CD4-positive, alpha-beta memory T cell (primary cell): ENCODE measurements at regions of chr19 and their contacts with region 1.

Region 1: DNA sequence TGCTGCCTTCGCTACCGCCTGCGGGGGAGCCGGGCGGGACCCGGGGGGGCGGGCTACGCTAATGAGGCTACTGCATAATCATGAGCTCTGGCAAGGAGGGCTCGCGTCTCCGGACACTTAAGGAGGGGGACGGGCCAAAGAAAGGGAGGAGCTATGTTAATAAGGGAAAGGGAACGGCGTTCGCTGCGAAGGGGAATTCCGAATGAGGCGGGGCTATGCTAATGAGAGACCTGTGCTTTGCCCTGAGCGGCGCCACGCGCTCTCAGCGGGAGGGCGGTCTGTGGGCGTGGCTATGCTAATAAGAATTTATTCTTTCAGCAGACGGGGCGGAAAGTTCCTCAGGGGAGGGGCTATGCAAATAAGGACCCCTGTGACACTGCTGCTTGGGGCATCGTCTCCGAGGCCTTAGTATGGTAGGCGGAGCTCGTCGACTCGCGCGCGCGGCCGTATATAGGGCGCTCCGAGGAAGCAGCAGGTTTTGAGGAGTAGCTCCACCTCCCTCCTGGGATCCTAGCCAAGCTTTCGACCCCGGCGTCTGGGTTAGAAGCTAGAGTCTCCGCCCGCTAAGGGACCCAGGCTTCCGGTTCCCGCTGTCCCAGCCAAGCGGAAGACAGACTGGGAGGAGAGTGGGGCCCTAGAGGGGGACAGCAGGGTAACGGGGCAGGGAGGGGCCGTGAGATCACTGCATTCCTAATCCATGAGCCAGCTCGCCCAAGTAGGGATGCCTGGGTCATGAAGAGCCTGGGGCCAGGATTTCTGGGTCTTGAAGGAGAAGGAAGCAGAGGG is at the start of gene RRAS:
- DNase-seq: peak; percentile 99 to 100 (median 100)
- H3K4me3 ChIP-seq: peak within 1 kb of the TSS; percentile 42 to 73
- H3K4me3 Mint-ChIP-seq: peak within 1 kb of the TSS; percentile 89 to 95 (median 92)
- H3K27ac ChIP-seq: peak within 1 kb of the TSS; percentile 97
- H3K27ac Mint-ChIP-seq: peak within 1 kb of the TSS; percentile 96 to 100 (median 99)
- H3K4me1 ChIP-seq: peaks cover 63% of the 10 kb centered on the region
- H3K4me1 Mint-ChIP-seq: peaks cover 44 to 73% (median 56%) of the 10 kb centered on the region in 4 donors
- H3K27me3 ChIP-seq: no peaks in the 10 kb centered on the region
- H3K27me3 Mint-ChIP-seq: no peaks in the 10 kb centered on the region
- total RNA-seq, gene RRAS: 12.0 to 13.4 TPM

Region 2: GRCh38 chr19:48513289-48514122 is 1126.8 kb before region 1 on chr19:
- CTCF ChIA-PET with region 1: no interaction called
- POLR2A ChIA-PET with region 1: no interaction called
- intact Hi-C with region 1: loop called (anchors 5 kb)
- DNase-seq: peak; percentile 70 to 88 (median 73)
- H3K4me3 ChIP-seq: peak overlapping the region; percentile 65 to 89
- H3K4me3 Mint-ChIP-seq: no peak overlapping the region
- H3K27ac ChIP-seq: peak overlapping the region; percentile 59
- H3K27ac Mint-ChIP-seq: peak overlapping the region in 3 of 7 donors; percentile 68 to 96 (median 91)
- H3K4me1 ChIP-seq: peaks cover 27% of the 10 kb centered on the region
- H3K4me1 Mint-ChIP-seq: peaks cover 6 to 16% (median 11%) of the 10 kb centered on the region in 4 donors
- H3K27me3 ChIP-seq: no peaks in the 10 kb centered on the region
- H3K27me3 Mint-ChIP-seq: no peaks in the 10 kb centered on the region

Region 3: GRCh38 chr19:49497047-49497788 is 143.1 kb before region 1 on chr19:
- CTCF ChIA-PET with region 1: no interaction called
- POLR2A ChIA-PET with region 1: interaction called, 38 read pairs
- intact Hi-C with region 1: loop called (anchors 1 kb)
- DNase-seq: peak; percentile 79 to 89 (median 83)
- H3K4me3 ChIP-seq: peak overlapping the region; percentile 92 to 99
- H3K4me3 Mint-ChIP-seq: peak overlapping the region; percentile 99 to 100 (median 100)
- H3K27ac ChIP-seq: peak overlapping the region; percentile 95
- H3K27ac Mint-ChIP-seq: peak overlapping the region; percentile 95 to 100 (median 99)
- H3K4me1 ChIP-seq: peaks cover 55% of the 10 kb centered on the region
- H3K4me1 Mint-ChIP-seq: peaks cover 23 to 87% (median 43%) of the 10 kb centered on the region in 4 donors
- H3K27me3 ChIP-seq: no peaks in the 10 kb centered on the region
- H3K27me3 Mint-ChIP-seq: no peaks in the 10 kb centered on the region

Region 4: GRCh38 chr19:49544154-49544553 is 96.2 kb before region 1 on chr19:
- CTCF ChIA-PET with region 1: no interaction called
- POLR2A ChIA-PET with region 1: no interaction called
- intact Hi-C with region 1: no loop called
- DNase-seq: no peak
- H3K4me3 ChIP-seq: no peak overlapping the region
- H3K4me3 Mint-ChIP-seq: peak overlapping the region in 1 of 8 donors; percentile 51
- H3K27ac ChIP-seq: no peak overlapping the region
- H3K27ac Mint-ChIP-seq: peak overlapping the region in 6 of 7 donors; percentile 23 to 83 (median 62)
- H3K4me1 ChIP-seq: peaks cover 19% of the 10 kb centered on the region
- H3K4me1 Mint-ChIP-seq: peaks cover 19 to 35% (median 25%) of the 10 kb centered on the region in 4 donors
- H3K27me3 ChIP-seq: no peaks in the 10 kb centered on the region
- H3K27me3 Mint-ChIP-seq: no peaks in the 10 kb centered on the region

Region 5: GRCh38 chr19:49590071-49590970 is 50.0 kb before region 1 on chr19:
- CTCF ChIA-PET with region 1: interaction called, 12 read pairs
- POLR2A ChIA-PET with region 1: interaction called, 81 read pairs
- intact Hi-C with region 1: loop called (anchors 1 kb)
- DNase-seq: peak; percentile 94 to 96 (median 95)
- H3K4me3 ChIP-seq: peak overlapping the region; percentile 68 to 95
- H3K4me3 Mint-ChIP-seq: peak overlapping the region; percentile 81 to 95 (median 93)
- H3K27ac ChIP-seq: peak overlapping the region; percentile 74
- H3K27ac Mint-ChIP-seq: peak overlapping the region; percentile 84 to 97 (median 94)
- H3K4me1 ChIP-seq: peaks cover 23% of the 10 kb centered on the region
- H3K4me1 Mint-ChIP-seq: peaks cover 21 to 48% (median 31%) of the 10 kb centered on the region in 4 donors
- H3K27me3 ChIP-seq: no peaks in the 10 kb centered on the region
- H3K27me3 Mint-ChIP-seq: no peaks in the 10 kb centered on the region

Region 6: GRCh38 chr19:49665351-49666119 is 25.2 kb after region 1 on chr19 and contains the starts of genes BCL2L12 and IRF3:
- CTCF ChIA-PET with region 1: interaction called, 6 read pairs
- POLR2A ChIA-PET with region 1: interaction called, 146 read pairs
- intact Hi-C with region 1: loop called (anchors 1 kb)
- DNase-seq: peak; percentile 99
- H3K4me3 ChIP-seq: peak within 1 kb of the TSS; percentile 99
- H3K4me3 Mint-ChIP-seq: peak within 1 kb of the TSS; percentile 95 to 100 (median 97)
- H3K27ac ChIP-seq: peak within 1 kb of the TSS; percentile 93
- H3K27ac Mint-ChIP-seq: peak within 1 kb of the TSS; percentile 95 to 100 (median 99)
- H3K4me1 ChIP-seq: peaks cover 31% of the 10 kb centered on the region
- H3K4me1 Mint-ChIP-seq: peaks cover 19 to 56% (median 31%) of the 10 kb centered on the region in 4 donors
- H3K27me3 ChIP-seq: no peaks in the 10 kb centered on the region
- H3K27me3 Mint-ChIP-seq: no peaks in the 10 kb centered on the region
- total RNA-seq, gene BCL2L12: 21.9 to 22.1 TPM
- total RNA-seq, gene IRF3: 366 to 386 TPM

Region 7: GRCh38 chr19:49869441-49870176 is 229.3 kb after region 1 on chr19:
- CTCF ChIA-PET with region 1: no interaction called
- POLR2A ChIA-PET with region 1: interaction called, 3 read pairs
- intact Hi-C with region 1: loop called (anchors 2 kb)
- DNase-seq: peak; percentile 92 to 94 (median 92)
- H3K4me3 ChIP-seq: peak overlapping the region; percentile 47 to 70
- H3K4me3 Mint-ChIP-seq: peak overlapping the region in 3 of 8 donors; percentile 78 to 87 (median 81)
- H3K27ac ChIP-seq: peak overlapping the region; percentile 66
- H3K27ac Mint-ChIP-seq: peak overlapping the region in 5 of 7 donors; percentile 88 to 94 (median 92)
- H3K4me1 ChIP-seq: peaks cover 53% of the 10 kb centered on the region
- H3K4me1 Mint-ChIP-seq: peaks cover 17 to 43% (median 22%) of the 10 kb centered on the region in 4 donors
- H3K27me3 ChIP-seq: no peaks in the 10 kb centered on the region
- H3K27me3 Mint-ChIP-seq: no peaks in the 10 kb centered on the region